ENCODE measurements at regions of chr3 and their contacts with region 1.

Region 1: GRCh38 chr3:99186016-99186415 is 284.5 kb upstream of the DCBLD2 start:
- DNase-seq: no peak
- ATAC-seq: no peak
- H3K4me3 ChIP-seq: no peak overlapping the region
- H3K27ac ChIP-seq: no peak overlapping the region
- H3K4me1 ChIP-seq: no peaks in the 10 kb centered on the region
- H3K27me3 ChIP-seq: no peaks in the 10 kb centered on the region
- CTCF ChIP-seq: no peak
- EP300 ChIP-seq: no peak
- POLR2A ChIP-seq: no peak
- RAD21 ChIP-seq: no peak

Region 2: GRCh38 chr3:99041747-99042146 is 144.3 kb before region 1 on chr3:
- CTCF ChIA-PET with region 1: no interaction called
- POLR2A ChIA-PET with region 1: no interaction called
- in situ Hi-C with region 1: no loop called
- intact Hi-C with region 1: loop called (anchors 5 kb)
- DNase-seq: no peak
- ATAC-seq: no peak
- H3K4me3 ChIP-seq: no peak overlapping the region
- H3K27ac ChIP-seq: no peak overlapping the region
- H3K4me1 ChIP-seq: no peaks in the 10 kb centered on the region
- H3K27me3 ChIP-seq: no peaks in the 10 kb centered on the region
- CTCF ChIP-seq: no peak
- EP300 ChIP-seq: no peak
- POLR2A ChIP-seq: no peak
- RAD21 ChIP-seq: no peak

Measured in HepG2 (cell line).